ENCODE measurements at regions of chrX and their contacts with region 1.

Region 1: GRCh38 chrX:15930585-15930984 is 76.0 kb upstream of the AP1S2 start:
- DNase-seq: peak; percentile 13
- ATAC-seq: peak; percentile 71
- H3K4me3 ChIP-seq: no peak overlapping the region
- H3K27ac ChIP-seq: no peak overlapping the region
- H3K4me1 ChIP-seq: no peaks in the 10 kb centered on the region
- H3K27me3 ChIP-seq: no peaks in the 10 kb centered on the region
- CTCF ChIP-seq: peak; percentile 22 to 29 (median 27); a peak in 3 of 6 replicates
- EP300 ChIP-seq: no peak
- POLR2A ChIP-seq: no peak
- RAD21 ChIP-seq: peak; percentile 73

Region 2: DNA sequence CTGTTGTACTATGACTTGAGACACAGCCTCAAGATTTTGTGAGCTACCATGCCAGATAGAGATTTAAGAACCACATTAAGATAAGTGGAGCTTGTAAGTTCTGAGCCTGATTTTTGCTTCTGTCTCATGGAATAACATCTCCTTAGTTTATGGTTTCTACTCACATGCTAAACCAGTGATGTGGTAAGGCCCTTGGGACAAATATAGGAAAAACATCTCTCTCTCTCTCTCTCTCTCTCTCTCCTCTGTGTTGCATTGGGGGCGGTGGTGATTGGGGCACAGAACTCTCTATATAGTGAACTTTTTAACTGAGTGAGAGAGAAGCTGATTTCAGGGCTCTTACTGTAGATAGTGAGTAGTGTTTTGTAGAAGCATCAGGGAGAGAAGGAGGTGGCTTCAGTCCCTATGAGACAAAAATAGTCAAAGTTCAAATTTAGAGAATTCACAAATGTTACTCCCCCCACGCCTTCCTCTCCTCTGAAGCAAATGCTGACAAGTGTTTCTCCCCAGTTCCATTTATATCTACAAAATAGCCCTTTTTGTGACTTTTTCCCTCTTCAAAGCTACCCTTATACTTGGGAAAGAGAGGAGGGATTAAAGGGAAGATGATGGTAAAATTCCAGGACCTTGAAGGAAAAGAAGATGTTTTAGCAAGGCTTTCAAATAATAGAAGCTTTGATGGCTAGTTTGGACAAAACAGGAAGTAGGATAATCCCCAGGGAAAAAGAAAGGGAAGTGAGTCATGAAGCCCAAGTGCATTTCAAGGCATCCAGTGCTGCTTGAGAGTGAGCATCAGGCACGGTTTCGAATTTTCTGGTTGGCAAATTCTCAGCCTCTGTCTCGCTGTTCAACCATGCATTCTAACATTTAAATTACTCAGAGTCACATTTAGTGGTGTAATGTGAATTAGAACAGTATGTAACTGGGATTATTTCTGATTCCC is 58.3 kb after region 1 on chrX:
- CTCF ChIA-PET with region 1: no interaction called
- POLR2A ChIA-PET with region 1: no interaction called
- RAD21 ChIA-PET with region 1: no interaction called
- SMC1A ChIA-PET with region 1: no interaction called
- in situ Hi-C with region 1: no loop called
- intact Hi-C with region 1: no loop called
- DNase-seq: no peak
- ATAC-seq: peak; percentile 49
- H3K4me3 ChIP-seq: no peak overlapping the region
- H3K27ac ChIP-seq: no peak overlapping the region
- H3K4me1 ChIP-seq: no peaks in the 10 kb centered on the region; the same call in 1 of the 2 replicates
- H3K27me3 ChIP-seq: no peaks in the 10 kb centered on the region
- CTCF ChIP-seq: no peak
- EP300 ChIP-seq: no peak
- POLR2A ChIP-seq: no peak
- RAD21 ChIP-seq: no peak

Region 3: DNA sequence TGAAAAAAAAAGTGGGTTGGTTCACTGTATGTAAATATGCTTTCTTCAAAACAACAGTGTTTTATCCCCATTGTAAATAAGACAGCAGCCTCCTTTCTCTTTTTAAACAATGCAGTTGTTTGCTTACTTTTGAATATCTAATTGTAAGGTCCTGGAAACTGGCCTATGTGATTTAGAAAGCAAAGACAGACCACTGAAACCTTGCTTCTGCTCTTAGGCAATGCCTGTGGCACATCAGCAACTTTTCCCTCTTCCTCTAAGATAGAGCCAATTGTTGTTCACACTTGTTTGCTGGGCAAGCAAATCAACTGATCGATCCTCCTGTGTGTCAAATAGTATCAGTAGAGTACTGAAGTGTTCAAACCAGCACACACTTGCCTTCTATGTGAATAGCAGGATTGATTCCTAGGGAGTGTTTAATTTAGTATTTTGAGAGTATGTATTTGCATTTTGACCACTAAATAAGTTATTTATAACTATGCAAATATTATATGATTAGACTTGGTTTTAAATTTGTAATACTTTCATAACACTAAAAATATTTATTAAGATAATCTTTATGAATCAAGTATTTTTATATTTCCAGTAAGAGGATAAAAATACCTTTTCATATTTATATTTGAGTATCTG is 137.4 kb after region 1 on chrX:
- CTCF ChIA-PET with region 1: no interaction called
- POLR2A ChIA-PET with region 1: no interaction called
- RAD21 ChIA-PET with region 1: no interaction called
- SMC1A ChIA-PET with region 1: no interaction called
- in situ Hi-C with region 1: no loop called
- intact Hi-C with region 1: no loop called
- DNase-seq: peak; percentile 30
- ATAC-seq: peak; percentile 92
- H3K4me3 ChIP-seq: no peak overlapping the region
- H3K27ac ChIP-seq: peak overlapping the region; percentile 47; the same call in 1 of the 2 replicates
- H3K4me1 ChIP-seq: no peaks in the 10 kb centered on the region
- H3K27me3 ChIP-seq: no peaks in the 10 kb centered on the region
- CTCF ChIP-seq: no peak
- EP300 ChIP-seq: no peak
- POLR2A ChIP-seq: no peak
- RAD21 ChIP-seq: no peak

Region 4: DNA sequence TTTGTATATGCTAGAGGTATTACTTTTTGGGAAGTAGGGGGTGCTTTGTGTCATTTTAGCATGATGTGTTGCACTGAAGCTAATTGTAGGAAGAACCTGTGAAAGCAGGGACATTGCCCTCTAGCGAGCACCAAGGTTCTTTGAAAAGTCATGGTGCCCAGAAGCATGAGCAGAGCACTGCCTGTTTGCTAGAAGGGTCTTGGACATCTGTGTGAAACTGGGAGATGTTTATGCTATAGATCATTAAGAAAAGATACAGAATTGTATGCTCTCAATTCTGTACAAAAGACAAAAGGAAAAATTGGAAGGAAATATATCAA is 207.5 kb after region 1 on chrX:
- CTCF ChIA-PET with region 1: interaction called, 25 read pairs
- POLR2A ChIA-PET with region 1: no interaction called
- RAD21 ChIA-PET with region 1: interaction called, 17 read pairs
- SMC1A ChIA-PET with region 1: interaction called, 36 read pairs
- in situ Hi-C with region 1: no loop called
- intact Hi-C with region 1: loop called (anchors 1 kb)
- DNase-seq: peak; percentile 16
- ATAC-seq: peak; percentile 82
- H3K4me3 ChIP-seq: no peak overlapping the region
- H3K27ac ChIP-seq: no peak overlapping the region
- H3K4me1 ChIP-seq: peaks cover 3% of the 10 kb centered on the region
- H3K27me3 ChIP-seq: peaks cover 0 to 2% of the 10 kb centered on the region in 2 experiments; a peak in 3 of 4 replicates
- CTCF ChIP-seq: peak; percentile 44 to 52 (median 51); a peak in 5 of 6 replicates
- EP300 ChIP-seq: no peak
- POLR2A ChIP-seq: no peak
- RAD21 ChIP-seq: peak; percentile 57

Region 5: DNA sequence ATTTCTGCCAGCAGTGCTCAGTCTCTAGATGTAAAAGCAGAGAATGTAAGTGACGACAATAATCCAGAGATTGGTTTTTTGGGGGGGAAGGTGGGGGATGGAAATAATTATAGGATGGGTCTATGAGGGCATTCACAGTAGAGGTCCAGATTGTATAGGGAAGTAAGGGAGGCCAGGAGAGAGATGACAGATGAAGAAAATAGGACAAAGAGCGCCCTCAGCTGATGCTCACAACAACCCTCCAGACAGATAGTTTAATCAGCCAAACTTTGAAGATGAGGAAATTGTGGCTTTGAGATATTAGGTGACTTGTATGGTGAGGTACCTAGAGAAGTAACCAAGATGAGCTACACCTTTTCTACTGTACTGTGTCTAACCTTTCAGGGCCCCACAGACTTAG is 374.6 kb after region 1 on chrX:
- CTCF ChIA-PET with region 1: interaction called, 3 read pairs
- POLR2A ChIA-PET with region 1: no interaction called
- RAD21 ChIA-PET with region 1: no interaction called
- SMC1A ChIA-PET with region 1: no interaction called
- in situ Hi-C with region 1: no loop called
- intact Hi-C with region 1: loop called (anchors 10 kb)
- DNase-seq: no peak
- ATAC-seq: no peak
- H3K4me3 ChIP-seq: no peak overlapping the region
- H3K27ac ChIP-seq: no peak overlapping the region
- H3K4me1 ChIP-seq: no peaks in the 10 kb centered on the region
- H3K27me3 ChIP-seq: no peaks in the 10 kb centered on the region
- CTCF ChIP-seq: 0 out of 6 replicates have a peak, but pooled peaks of 1 of the 3 experiments have one; percentile 2
- EP300 ChIP-seq: no peak
- POLR2A ChIP-seq: no peak
- RAD21 ChIP-seq: no peak

Region 6: GRCh38 chrX:16445166-16445752 is 514.7 kb after region 1 on chrX:
- CTCF ChIA-PET with region 1: interaction called, 3 read pairs
- POLR2A ChIA-PET with region 1: no interaction called
- RAD21 ChIA-PET with region 1: no interaction called
- SMC1A ChIA-PET with region 1: interaction called, 9 read pairs
- in situ Hi-C with region 1: no loop called
- intact Hi-C with region 1: loop called (anchors 1 kb)
- DNase-seq: no peak
- ATAC-seq: peak; percentile 96
- H3K4me3 ChIP-seq: no peak overlapping the region
- H3K27ac ChIP-seq: no peak overlapping the region
- H3K4me1 ChIP-seq: no peaks in the 10 kb centered on the region
- H3K27me3 ChIP-seq: no peaks in the 10 kb centered on the region; a peak in 2 of 4 replicates
- CTCF ChIP-seq: peak; percentile 73 to 89 (median 74)
- EP300 ChIP-seq: no peak
- POLR2A ChIP-seq: no peak
- RAD21 ChIP-seq: peak; percentile 72